Common myeloid progenitor, CD34-positive (primary cell): ENCODE measurements at regions of chr19 and their contacts with region 1.

Region 1: GRCh38 chr19:39119554-39120229 is 5.9 kb upstream of the PAK4 start:
- DNase-seq: no peak
- H3K4me3 ChIP-seq: no peak overlapping the region
- H3K27ac ChIP-seq: no peak overlapping the region
- H3K4me1 ChIP-seq: peaks cover 0 to 3% (median 0%) of the 10 kb centered on the region in 4 experiments
- H3K27me3 ChIP-seq: no peaks in the 10 kb centered on the region

Region 2: GRCh38 chr19:39045506-39046117 is 74.1 kb before region 1 on chr19:
- CTCF ChIA-PET with region 1: no interaction called
- POLR2A ChIA-PET with region 1: no interaction called
- DNase-seq: no peak
- H3K4me3 ChIP-seq: no peak overlapping the region
- H3K27ac ChIP-seq: no peak overlapping the region
- H3K4me1 ChIP-seq: no peaks in the 10 kb centered on the region
- H3K27me3 ChIP-seq: peaks cover 0 to 4% (median 0%) of the 10 kb centered on the region in 5 experiments

Region 3: DNA sequence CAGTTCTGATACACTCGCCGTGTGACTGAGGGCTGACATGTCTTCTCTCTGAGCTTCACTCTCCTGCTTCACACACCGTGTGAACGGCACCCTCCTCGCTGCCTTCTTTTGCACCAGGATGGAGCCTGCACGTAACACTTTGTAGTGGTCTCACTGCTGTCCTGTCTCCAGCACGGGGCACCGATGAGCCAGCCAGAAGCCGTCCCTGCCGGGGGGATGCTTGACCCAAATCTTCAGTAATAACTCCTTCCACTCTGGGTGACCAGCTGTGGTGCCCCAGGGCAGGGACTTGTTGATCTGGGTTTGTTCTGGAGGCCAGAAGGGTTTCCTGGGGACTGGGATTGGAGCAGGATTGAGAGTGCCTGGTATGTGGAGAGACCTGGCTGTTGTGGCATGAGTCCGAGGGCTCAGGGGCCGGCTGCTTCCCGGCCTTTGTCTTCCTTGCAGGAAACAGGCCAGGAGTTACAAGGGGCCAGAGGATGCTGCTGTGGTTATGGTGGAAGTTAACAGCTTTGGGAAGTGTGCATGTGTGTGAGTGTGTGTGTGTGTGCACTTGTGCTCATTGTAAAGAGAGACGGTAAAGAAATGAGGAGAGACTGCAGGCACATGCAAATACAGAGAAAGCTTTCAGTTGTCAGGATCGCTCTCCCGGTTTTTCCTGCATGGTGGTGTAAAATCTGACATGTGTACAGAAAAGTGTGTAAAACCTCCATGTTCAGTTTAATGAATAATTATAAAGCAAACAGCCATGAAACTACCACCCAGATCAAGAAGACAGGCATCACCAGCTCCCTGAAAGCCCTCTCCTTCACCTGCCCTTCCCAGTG is 24.8 kb after region 1 on chr19:
- CTCF ChIA-PET with region 1: interaction called, 33 read pairs
- POLR2A ChIA-PET with region 1: no interaction called
- DNase-seq: peak; percentile 32 to 58 (median 45)
- H3K4me3 ChIP-seq: peak overlapping the region in 5 of 7 experiments; percentile 1 to 66 (median 43)
- H3K27ac ChIP-seq: peak overlapping the region in 1 of 2 experiments; percentile 29
- H3K4me1 ChIP-seq: peaks cover 2 to 49% (median 45%) of the 10 kb centered on the region in 4 experiments
- H3K27me3 ChIP-seq: no peaks in the 10 kb centered on the region

Region 4: DNA sequence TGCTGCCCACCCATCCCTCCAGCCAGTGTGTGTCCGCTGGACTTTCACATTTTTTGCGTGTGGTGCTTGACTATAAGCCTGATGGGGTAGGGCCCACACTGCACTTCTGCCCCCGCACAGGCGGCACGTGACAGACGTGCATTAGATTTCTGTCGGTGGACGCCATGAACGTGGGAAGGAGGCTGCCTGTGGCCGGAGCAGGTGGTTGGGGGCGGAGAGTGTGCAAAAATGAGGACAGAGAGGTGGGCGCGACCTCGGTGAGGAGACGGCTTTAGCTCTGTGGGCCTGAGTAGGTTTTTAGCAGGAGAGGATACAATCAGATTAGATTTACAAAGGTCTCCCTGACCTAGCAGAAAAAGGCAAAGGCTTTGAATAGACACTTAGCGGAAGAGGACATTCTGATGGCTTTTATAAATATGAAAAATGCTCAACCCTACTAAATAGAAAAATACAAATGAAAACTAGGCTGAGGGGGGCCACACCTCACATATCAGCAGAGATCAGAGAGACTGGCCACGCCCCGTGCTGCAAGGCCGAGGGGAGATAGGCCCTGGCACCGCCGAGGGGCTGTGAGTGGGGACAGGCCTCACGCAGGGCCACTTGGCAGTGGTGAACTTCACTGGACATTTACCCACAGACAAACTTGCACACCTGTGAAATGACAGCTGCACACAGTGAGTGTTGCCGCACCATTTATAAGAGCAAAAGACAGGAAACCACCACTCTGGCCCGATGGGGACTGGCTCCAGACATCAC is 31.3 kb after region 1 on chr19:
- CTCF ChIA-PET with region 1: interaction called, 33 read pairs
- POLR2A ChIA-PET with region 1: no interaction called
- DNase-seq: no peak
- H3K4me3 ChIP-seq: no peak overlapping the region
- H3K27ac ChIP-seq: no peak overlapping the region
- H3K4me1 ChIP-seq: peaks cover 0 to 25% (median 21%) of the 10 kb centered on the region in 4 experiments
- H3K27me3 ChIP-seq: no peaks in the 10 kb centered on the region